H1 (cell line): ENCODE measurements at regions of chr18 and their contacts with region 1.

Region 1: DNA sequence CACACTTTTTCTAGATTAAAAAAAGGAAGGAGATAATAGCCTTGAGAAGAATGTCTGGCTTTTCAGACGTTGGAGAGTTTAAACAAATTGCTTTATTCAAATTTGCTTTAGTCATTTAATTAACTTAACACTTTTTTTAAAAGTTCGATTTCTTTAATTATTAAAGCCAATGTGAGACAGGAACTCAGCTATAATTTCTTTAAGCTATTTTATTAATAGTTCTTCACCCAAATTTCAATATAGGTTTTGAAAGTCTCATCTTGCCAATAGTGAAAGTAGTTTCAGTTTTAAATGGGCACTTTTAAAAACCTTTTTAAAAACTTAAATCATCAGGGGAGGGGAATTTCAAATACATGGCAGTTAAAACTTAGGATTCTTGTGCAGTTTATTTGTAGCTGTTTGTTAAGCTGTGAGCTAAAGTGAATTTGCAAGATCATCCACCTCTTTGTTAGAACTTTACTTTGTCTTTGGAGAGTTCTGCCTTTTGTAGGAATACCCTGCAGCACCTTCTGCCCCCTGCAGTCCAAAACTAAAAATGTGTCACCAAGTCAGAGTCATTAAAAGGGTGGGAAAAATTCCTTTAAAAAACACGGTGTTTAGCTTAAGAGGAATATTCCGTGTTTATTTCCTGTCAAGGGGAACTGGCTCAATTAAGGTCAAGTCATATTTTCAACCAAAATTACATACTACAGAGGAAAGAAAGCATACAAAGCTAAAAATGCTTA is 4.6 kb downstream of the TGIF1 start:
- DNase-seq: no peak
- H3K4me3 ChIP-seq: peak overlapping the region; percentile 25 to 99 (median 63); a peak in 7 of 8 replicates
- H3K27ac ChIP-seq: peak overlapping the region; percentile 35; the same call in 1 of the 2 replicates
- H3K4me1 ChIP-seq: peaks cover 11 to 25% (median 23%) of the 10 kb centered on the region in 4 experiments; a peak in 6 of 7 replicates
- H3K27me3 ChIP-seq: no peaks in the 10 kb centered on the region
- CTCF ChIP-seq: peak in 2 of 3 experiments; percentile 47 to 67; a peak in 2 of 4 replicates
- EP300 ChIP-seq: no peak
- POLR2A ChIP-seq: peak in 1 of 2 experiments; percentile 36; a peak in 2 of 3 replicates
- RAD21 ChIP-seq: peak; percentile 62 to 65

Region 2: DNA sequence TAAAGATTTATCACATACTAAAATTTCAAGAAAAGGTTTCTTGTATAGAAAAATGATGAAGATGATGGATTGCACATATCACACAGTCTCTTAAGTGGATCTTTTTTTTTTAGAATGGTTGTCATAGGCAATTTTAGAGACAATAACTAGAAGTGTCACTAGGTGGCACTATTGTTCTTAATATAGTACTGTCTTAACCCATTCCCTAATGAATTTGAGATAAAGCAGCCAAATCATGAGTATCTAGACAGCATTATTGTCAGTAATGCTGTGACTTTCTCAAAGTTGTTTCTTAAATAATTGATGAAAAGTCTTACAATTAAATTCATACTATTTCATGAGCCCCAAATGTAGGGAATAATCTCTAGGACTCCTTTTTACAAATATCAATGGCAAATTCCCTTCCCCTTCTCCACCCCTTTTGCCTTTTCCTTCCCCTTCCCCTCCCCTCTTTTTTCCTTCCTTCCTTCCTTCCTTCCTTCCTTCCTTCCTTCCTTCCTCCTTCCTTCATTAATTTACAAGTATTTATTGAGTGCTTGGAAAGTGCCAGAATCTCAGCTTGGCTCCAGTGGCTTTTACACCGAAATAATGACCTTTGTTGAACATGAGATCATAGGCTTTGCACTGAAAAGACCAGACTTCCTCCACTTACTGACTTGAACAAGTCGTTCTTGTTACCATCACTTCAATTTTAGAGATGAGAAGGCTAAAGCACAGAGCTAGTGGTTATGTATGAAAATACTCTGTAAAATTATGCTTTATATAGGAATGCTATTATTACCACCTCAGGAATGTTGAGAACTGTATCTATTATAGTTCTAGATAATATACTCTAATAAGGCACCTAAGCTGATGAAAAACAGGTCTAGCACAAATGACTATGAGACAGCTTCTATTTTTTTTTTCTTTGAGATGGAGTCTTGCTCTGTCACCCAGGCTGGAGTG is 172.8 kb before region 1 on chr18:
- CTCF ChIA-PET with region 1: interaction called, 12 read pairs
- POLR2A ChIA-PET with region 1: interaction called, 5 read pairs
- DNase-seq: no peak
- H3K4me3 ChIP-seq: no peak overlapping the region
- H3K27ac ChIP-seq: no peak overlapping the region
- H3K4me1 ChIP-seq: peaks cover 0 to 7% (median 2%) of the 10 kb centered on the region in 4 experiments; a peak in 3 of 7 replicates
- H3K27me3 ChIP-seq: no peaks in the 10 kb centered on the region
- CTCF ChIP-seq: peak in 2 of 3 experiments; percentile 34 to 53; a peak in 2 of 4 replicates
- EP300 ChIP-seq: no peak
- POLR2A ChIP-seq: no peak
- RAD21 ChIP-seq: peak; percentile 74 to 85

Region 3: DNA sequence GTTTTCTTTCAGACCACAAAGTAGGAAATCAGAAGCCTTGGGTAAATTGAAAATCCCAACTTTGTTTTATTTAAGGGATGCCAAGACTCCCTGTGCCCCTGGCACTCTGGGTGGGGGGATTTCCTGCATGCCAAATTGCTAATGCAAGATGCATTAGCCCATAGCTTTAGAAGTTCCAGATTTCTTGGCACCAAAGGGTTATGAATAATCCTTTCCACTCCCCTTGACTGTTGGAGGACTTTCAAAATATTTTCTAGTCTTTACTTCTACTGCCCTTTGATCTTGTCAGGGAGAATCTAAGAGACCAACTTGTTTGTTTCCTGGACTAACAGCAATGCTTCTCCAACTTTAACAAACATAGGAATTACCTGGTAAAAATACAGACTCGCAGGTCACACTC is 86.3 kb before region 1 on chr18:
- CTCF ChIA-PET with region 1: no interaction called
- POLR2A ChIA-PET with region 1: no interaction called
- DNase-seq: no peak
- H3K4me3 ChIP-seq: no peak overlapping the region
- H3K27ac ChIP-seq: no peak overlapping the region
- H3K4me1 ChIP-seq: no peaks in the 10 kb centered on the region
- H3K27me3 ChIP-seq: no peaks in the 10 kb centered on the region
- CTCF ChIP-seq: no peak
- EP300 ChIP-seq: no peak
- POLR2A ChIP-seq: no peak
- RAD21 ChIP-seq: no peak

Region 4: DNA sequence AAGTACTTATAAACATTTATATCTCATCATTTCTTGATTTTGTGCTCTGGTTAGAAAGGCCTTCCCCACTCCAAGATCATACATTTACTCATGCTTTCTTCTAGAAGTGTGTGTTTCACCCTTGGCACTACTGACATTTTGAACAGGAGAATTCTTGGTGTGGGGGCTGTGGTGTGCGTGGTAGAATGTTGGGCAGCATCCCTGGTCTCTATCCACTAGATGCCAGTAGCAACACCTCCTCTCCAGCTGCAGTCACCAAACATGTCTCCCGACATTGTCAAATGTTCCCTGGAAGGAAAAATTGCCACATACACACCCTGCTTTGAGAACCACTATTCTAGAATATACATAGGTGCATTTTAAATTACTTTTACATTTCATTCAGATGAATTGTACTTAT is 13.2 kb before region 1 on chr18:
- CTCF ChIA-PET with region 1: interaction called, 11 read pairs
- POLR2A ChIA-PET with region 1: interaction called, 4 read pairs
- DNase-seq: no peak
- H3K4me3 ChIP-seq: peak overlapping the region in 1 of 4 experiments; percentile 10; a peak in 1 of 8 replicates
- H3K27ac ChIP-seq: no peak overlapping the region
- H3K4me1 ChIP-seq: peaks cover 0 to 10% (median 7%) of the 10 kb centered on the region in 4 experiments; a peak in 5 of 7 replicates
- H3K27me3 ChIP-seq: no peaks in the 10 kb centered on the region
- CTCF ChIP-seq: peak; percentile 54 to 72 (median 60); a peak in 3 of 4 replicates
- EP300 ChIP-seq: no peak
- POLR2A ChIP-seq: no peak
- RAD21 ChIP-seq: peak; percentile 67 to 76

Region 5: DNA sequence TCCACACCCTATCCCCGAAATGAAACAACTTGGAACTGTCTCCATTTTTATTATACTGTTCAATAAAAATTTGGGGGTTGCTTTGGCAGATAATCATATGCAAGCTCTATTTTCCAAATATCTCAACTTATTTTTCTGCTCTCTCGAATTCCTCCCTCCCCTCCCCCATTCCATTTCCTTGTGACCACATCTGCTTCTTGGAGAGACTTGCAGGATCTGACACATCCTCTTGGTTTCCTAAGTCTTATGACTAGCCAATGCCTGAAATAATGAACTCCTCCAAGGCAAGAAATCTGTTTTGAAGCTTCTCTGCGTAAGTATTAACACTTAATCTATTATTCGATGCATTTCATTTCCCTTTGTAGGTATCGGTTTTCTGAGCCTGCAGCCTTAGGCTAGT is 11.5 kb after region 1 on chr18:
- CTCF ChIA-PET with region 1: interaction called, 56 read pairs
- POLR2A ChIA-PET with region 1: interaction called, 58 read pairs
- DNase-seq: no peak
- H3K4me3 ChIP-seq: no peak overlapping the region
- H3K27ac ChIP-seq: no peak overlapping the region
- H3K4me1 ChIP-seq: peaks cover 7 to 19% (median 9%) of the 10 kb centered on the region in 4 experiments; a peak in 6 of 7 replicates
- H3K27me3 ChIP-seq: no peaks in the 10 kb centered on the region
- CTCF ChIP-seq: no peak
- EP300 ChIP-seq: no peak
- POLR2A ChIP-seq: no peak
- RAD21 ChIP-seq: no peak

Region 6: GRCh38 chr18:3481696-3482210 is 27.2 kb after region 1 on chr18:
- CTCF ChIA-PET with region 1: interaction called, 11 read pairs
- POLR2A ChIA-PET with region 1: interaction called, 8 read pairs
- DNase-seq: peak in 1 of 2 experiments; percentile 61
- H3K4me3 ChIP-seq: no peak overlapping the region
- H3K27ac ChIP-seq: no peak overlapping the region
- H3K4me1 ChIP-seq: peaks cover 0 to 7% (median 3%) of the 10 kb centered on the region in 4 experiments; a peak in 4 of 7 replicates
- H3K27me3 ChIP-seq: no peaks in the 10 kb centered on the region
- CTCF ChIP-seq: peak in 2 of 3 experiments; percentile 65 to 78; a peak in 3 of 4 replicates
- EP300 ChIP-seq: no peak
- POLR2A ChIP-seq: no peak
- RAD21 ChIP-seq: peak; percentile 50 to 69

Region 7: DNA sequence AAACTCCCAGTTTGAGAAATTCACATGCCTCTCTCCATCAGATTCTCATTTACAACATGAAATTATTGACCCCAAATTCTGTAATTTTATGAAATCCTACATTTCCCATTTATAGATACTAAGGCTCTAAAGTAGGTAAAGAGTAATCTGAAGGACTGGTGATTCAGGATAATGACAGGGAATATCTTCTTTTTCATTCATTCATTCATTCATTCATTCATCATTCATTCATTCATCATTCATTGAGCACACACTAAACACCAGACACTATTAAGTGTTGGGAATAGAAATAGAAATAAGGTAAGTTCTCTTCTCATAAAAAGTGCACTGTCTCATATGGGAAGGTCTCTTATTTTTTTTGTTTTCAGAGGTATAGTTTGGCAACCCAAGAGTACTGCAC is 112.3 kb after region 1 on chr18:
- CTCF ChIA-PET with region 1: no interaction called
- POLR2A ChIA-PET with region 1: no interaction called
- DNase-seq: no peak
- H3K4me3 ChIP-seq: no peak overlapping the region
- H3K27ac ChIP-seq: no peak overlapping the region
- H3K4me1 ChIP-seq: no peaks in the 10 kb centered on the region
- H3K27me3 ChIP-seq: no peaks in the 10 kb centered on the region
- CTCF ChIP-seq: no peak
- EP300 ChIP-seq: no peak
- POLR2A ChIP-seq: no peak
- RAD21 ChIP-seq: no peak

Region 8: DNA sequence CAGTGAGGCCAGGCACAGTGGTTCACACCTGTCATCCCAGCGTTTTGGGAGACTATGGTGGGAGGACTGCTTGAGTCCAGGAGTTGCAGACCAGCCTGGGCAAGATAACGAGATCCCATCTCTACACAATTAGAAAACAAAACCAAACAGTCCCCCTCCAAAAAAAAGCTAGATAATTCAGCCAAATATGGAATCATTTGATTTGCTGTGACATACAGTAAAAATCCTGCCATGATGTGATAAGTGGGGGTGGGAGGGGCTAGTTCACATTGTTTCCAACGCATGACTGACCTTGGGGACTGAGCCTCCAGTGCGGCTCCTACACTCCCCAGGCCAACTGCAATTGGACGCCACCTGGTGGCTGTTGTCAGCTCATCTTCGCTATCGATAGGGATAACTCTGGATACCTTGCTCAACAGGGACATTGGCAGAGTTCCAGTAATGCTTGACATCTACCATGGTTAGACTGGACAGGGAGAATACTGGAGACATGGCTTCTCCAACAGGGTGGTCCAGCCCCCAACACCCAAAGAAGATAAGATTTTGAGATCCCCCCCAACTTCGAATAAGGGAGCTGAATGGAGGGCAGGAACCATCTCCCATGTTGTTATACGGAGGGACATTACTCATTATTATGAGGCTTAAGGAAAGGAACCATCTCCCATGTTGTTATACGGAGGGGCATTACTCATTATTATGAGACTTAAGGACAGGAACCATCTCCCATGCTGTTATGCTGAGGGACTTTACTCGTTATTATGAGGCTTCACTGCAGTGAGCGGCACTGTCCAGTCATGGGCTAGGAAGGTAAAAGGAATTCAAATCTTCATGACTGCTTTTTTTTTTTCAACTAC is 131.4 kb after region 1 on chr18:
- CTCF ChIA-PET with region 1: interaction called, 31 read pairs
- POLR2A ChIA-PET with region 1: interaction called, 8 read pairs
- DNase-seq: peak; percentile 63 to 84
- H3K4me3 ChIP-seq: no peak overlapping the region
- H3K27ac ChIP-seq: no peak overlapping the region
- H3K4me1 ChIP-seq: peaks cover 3 to 13% (median 9%) of the 10 kb centered on the region in 4 experiments
- H3K27me3 ChIP-seq: no peaks in the 10 kb centered on the region
- CTCF ChIP-seq: peak; percentile 86 to 96 (median 91)
- EP300 ChIP-seq: no peak
- POLR2A ChIP-seq: no peak
- RAD21 ChIP-seq: peak; percentile 88 to 92

Region 9: DNA sequence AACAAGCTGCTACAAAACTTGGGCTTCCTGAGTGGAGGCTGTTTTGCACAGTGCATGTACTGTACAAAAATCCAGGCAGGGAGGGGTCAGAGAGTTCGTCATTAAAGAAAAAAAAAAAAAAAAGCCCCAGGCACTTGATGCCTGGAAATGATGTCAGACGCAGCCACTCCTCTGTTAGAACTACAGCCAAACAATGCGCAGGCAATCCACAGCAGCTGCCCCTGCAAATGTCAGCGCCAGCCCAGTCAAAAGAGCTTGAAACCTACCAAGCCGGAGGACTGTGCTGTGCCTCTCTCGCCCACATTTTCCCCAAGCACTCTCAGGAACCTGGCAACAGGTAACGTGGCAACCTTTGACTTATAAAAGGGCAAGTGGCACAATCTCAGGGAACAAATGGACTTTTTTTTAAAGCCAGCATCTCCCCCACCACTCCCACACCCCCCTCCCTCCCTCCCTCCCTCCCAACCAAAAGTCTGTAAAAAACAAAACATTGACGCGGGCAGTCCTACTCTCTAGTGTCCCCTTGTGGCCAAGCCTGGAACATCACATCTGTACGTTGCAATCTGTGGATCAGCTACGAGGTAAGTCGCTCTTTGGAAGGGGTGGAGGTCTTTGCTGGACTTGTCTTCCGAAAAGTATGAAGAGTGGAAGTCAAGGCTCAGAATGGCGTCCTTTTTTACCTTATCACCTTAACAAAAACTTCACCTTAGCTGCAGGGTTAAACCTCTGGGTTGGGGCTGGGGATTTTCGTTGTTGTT is 139.6 kb after region 1 on chr18:
- CTCF ChIA-PET with region 1: interaction called, 23 read pairs
- POLR2A ChIA-PET with region 1: interaction called, 8 read pairs
- DNase-seq: peak; percentile 77 to 95
- H3K4me3 ChIP-seq: peak overlapping the region; percentile 17 to 53 (median 46); a peak in 6 of 8 replicates
- H3K27ac ChIP-seq: no peak overlapping the region; the same call in 1 of the 2 replicates
- H3K4me1 ChIP-seq: peaks cover 15 to 35% (median 24%) of the 10 kb centered on the region in 4 experiments
- H3K27me3 ChIP-seq: peaks cover 0 to 15% (median 8%) of the 10 kb centered on the region in 4 experiments; a peak in 6 of 7 replicates
- CTCF ChIP-seq: peak; percentile 73 to 89 (median 88)
- EP300 ChIP-seq: no peak
- POLR2A ChIP-seq: no peak
- RAD21 ChIP-seq: peak; percentile 71 to 75